WTC11 (cell line): ENCODE measurements at regions of chr17 and their contacts with region 1.

Region 1: GRCh38 chr17:66727639-66728570 is 107.0 kb upstream of the CACNG5 start:
- DNase-seq: peak; percentile 79
- ATAC-seq: peak; percentile 83
- H3K4me3 Mint-ChIP-seq: no peak overlapping the region
- H3K27ac Mint-ChIP-seq: peak overlapping the region; percentile 49
- H3K4me1 Mint-ChIP-seq: peaks cover 67% of the 10 kb centered on the region
- H3K27me3 Mint-ChIP-seq: no peaks in the 10 kb centered on the region
- CTCF ChIP-seq: peak; percentile 36; the same call in 1 of the 2 replicates

Region 2: GRCh38 chr17:66625311-66625775 is 102.6 kb before region 1 on chr17:
- CTCF ChIA-PET with region 1: no interaction called
- POLR2A ChIA-PET with region 1: no interaction called
- DNase-seq: no peak
- ATAC-seq: peak; percentile 71
- H3K4me3 Mint-ChIP-seq: no peak overlapping the region
- H3K27ac Mint-ChIP-seq: no peak overlapping the region
- H3K4me1 Mint-ChIP-seq: peaks cover 17% of the 10 kb centered on the region
- H3K27me3 Mint-ChIP-seq: no peaks in the 10 kb centered on the region
- CTCF ChIP-seq: no peak

Region 3: GRCh38 chr17:66647386-66647983 is 80.4 kb before region 1 on chr17:
- CTCF ChIA-PET with region 1: no interaction called
- POLR2A ChIA-PET with region 1: no interaction called
- DNase-seq: no peak
- ATAC-seq: no peak
- H3K4me3 Mint-ChIP-seq: no peak overlapping the region
- H3K27ac Mint-ChIP-seq: no peak overlapping the region
- H3K4me1 Mint-ChIP-seq: peaks cover 21% of the 10 kb centered on the region
- H3K27me3 Mint-ChIP-seq: no peaks in the 10 kb centered on the region
- CTCF ChIP-seq: no peak

Region 4: GRCh38 chr17:66799849-66800537 is 72.1 kb after region 1 on chr17:
- CTCF ChIA-PET with region 1: interaction called, 10 read pairs
- POLR2A ChIA-PET with region 1: no interaction called
- DNase-seq: no peak
- ATAC-seq: no peak
- H3K4me3 Mint-ChIP-seq: no peak overlapping the region
- H3K27ac Mint-ChIP-seq: no peak overlapping the region
- H3K4me1 Mint-ChIP-seq: peaks cover 28% of the 10 kb centered on the region
- H3K27me3 Mint-ChIP-seq: no peaks in the 10 kb centered on the region; the same call in 1 of the 2 replicates
- CTCF ChIP-seq: no peak

Region 5: GRCh38 chr17:66822009-66822408 is 94.1 kb after region 1 on chr17:
- CTCF ChIA-PET with region 1: no interaction called
- POLR2A ChIA-PET with region 1: no interaction called
- DNase-seq: no peak
- ATAC-seq: no peak
- H3K4me3 Mint-ChIP-seq: no peak overlapping the region
- H3K27ac Mint-ChIP-seq: no peak overlapping the region
- H3K4me1 Mint-ChIP-seq: peaks cover 3% of the 10 kb centered on the region
- H3K27me3 Mint-ChIP-seq: no peaks in the 10 kb centered on the region; the same call in 1 of the 2 replicates
- CTCF ChIP-seq: no peak

Region 6: DNA sequence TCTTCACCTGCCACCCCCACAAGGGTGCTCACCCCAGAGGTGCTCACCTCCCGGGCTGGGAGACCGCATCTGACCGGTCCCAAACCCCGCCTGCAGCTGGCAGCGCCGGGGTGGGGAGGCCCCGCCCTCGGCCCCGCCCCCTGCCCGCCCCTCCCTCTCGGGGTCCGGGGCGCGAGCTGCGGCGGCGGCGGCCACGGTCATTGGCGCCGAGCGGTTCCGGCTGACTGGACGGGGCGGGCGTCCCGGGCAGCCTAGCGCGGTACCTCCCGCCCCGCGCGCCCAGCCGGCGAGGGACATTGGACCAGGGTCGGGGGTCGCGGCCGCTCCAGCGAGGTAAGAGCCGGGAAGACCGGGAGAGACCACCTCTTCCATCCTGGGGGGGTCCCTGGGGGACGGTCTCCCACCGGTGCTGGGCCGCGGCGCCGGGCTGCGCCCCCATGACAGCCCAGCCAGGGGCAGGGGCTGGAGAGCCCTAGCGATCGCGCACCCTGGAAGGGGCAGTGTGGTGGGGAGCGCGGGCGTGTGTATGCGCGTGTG is 107.1 kb after region 1 on chr17 and contains the start of gene CACNG5:
- CTCF ChIA-PET with region 1: interaction called, 13 read pairs
- POLR2A ChIA-PET with region 1: no interaction called
- DNase-seq: peak; percentile 69
- ATAC-seq: peak; percentile 91
- H3K4me3 Mint-ChIP-seq: peak within 1 kb of the TSS; percentile 59
- H3K27ac Mint-ChIP-seq: no peak within 1 kb of the TSS
- H3K4me1 Mint-ChIP-seq: peaks cover 13% of the 10 kb centered on the region
- H3K27me3 Mint-ChIP-seq: peaks cover 33% of the 10 kb centered on the region
- CTCF ChIP-seq: no peak
- total RNA-seq, gene CACNG5: 1.9 to 3.1 TPM (median 2.8 TPM) in 3 replicates

Region 7: GRCh38 chr17:66900126-66901010 is 172.5 kb after region 1 on chr17:
- CTCF ChIA-PET with region 1: interaction called, 18 read pairs
- POLR2A ChIA-PET with region 1: no interaction called
- DNase-seq: no peak
- ATAC-seq: no peak
- H3K4me3 Mint-ChIP-seq: no peak overlapping the region
- H3K27ac Mint-ChIP-seq: no peak overlapping the region
- H3K4me1 Mint-ChIP-seq: 0 out of 2 replicates have a peak, but pooled peaks cover 2% of the 10 kb centered on the region
- H3K27me3 Mint-ChIP-seq: peaks cover 2% of the 10 kb centered on the region; the same call in 1 of the 2 replicates
- CTCF ChIP-seq: no peak

Region 8: DNA sequence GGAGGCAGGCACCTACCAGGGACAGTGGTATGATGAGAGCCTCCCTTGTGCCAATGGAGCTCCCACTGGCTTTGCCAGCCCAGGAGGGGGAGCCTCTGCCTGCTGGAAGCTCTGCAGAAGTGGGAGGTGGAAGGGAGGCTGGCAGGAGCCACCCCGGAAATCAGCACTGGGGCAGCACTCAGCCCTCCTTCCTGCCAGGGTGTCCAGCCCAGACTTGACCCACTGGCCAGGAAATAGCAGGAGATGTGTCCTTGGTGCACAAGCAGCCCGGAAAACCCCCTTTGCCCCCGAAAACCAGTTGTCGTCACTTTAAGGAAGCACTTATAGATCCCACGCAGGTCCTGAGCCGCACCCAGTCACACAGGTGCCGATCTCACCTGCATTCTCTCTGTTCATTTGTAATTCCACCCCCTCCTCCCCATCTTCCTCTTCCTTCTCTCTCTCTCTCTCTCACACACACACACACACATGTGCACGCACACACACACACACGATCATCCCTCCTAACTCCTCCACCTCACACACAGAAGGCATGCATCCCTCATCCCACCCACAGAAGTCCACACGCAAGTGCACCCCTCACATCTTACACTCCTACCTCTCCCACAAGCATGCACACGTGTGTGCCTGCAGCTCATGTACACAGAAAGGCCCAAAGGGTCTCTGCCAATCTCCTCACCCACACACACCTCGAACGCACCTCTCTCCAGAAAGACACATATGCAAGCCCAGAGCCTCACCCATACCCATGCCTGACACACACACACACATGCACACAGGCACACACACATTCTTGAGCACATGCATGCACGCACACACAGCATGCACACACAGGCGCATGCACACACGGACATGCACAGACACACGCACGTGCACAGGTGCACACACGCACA is 187.5 kb after region 1 on chr17:
- CTCF ChIA-PET with region 1: interaction called, 12 read pairs
- POLR2A ChIA-PET with region 1: no interaction called
- DNase-seq: peak; percentile 43
- ATAC-seq: peak; percentile 82
- H3K4me3 Mint-ChIP-seq: no peak overlapping the region
- H3K27ac Mint-ChIP-seq: no peak overlapping the region
- H3K4me1 Mint-ChIP-seq: no peaks in the 10 kb centered on the region
- H3K27me3 Mint-ChIP-seq: no peaks in the 10 kb centered on the region; the same call in none of the 2 replicates
- CTCF ChIP-seq: no peak

Region 9: GRCh38 chr17:67016039-67016762 is 288.3 kb after region 1 on chr17:
- CTCF ChIA-PET with region 1: interaction called, 10 read pairs
- POLR2A ChIA-PET with region 1: no interaction called
- DNase-seq: peak; percentile 78
- ATAC-seq: peak; percentile 91
- H3K4me3 Mint-ChIP-seq: no peak overlapping the region
- H3K27ac Mint-ChIP-seq: no peak overlapping the region
- H3K4me1 Mint-ChIP-seq: peaks cover 4% of the 10 kb centered on the region
- H3K27me3 Mint-ChIP-seq: no peaks in the 10 kb centered on the region
- CTCF ChIP-seq: peak; percentile 33; the same call in 1 of the 2 replicates